ENCODE measurements at regions of chr9 and their contacts with region 1.

Region 1: DNA sequence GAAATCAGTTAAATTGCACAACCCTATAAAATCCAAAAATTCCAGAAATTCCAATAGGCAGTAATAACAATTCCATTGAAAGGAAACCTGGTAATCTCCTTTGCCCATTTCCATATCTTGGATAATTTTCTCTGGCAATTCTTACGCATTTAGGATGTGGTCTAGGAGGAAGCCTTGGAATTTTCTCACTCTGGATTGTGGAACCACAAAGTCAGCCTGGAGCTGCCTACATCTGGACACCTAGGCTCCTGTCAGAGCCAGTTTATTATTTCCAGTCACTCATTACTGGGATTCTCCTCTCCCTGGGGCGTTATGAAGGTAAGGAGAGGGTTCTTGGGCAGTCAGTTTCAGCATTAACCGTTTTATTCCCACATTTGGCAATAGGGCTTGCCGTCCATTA is 40.3 kb upstream of the GNE start:
- DNase-seq: no peak
- ATAC-seq: no peak
- H3K4me3 ChIP-seq: no peak overlapping the region
- H3K4me3 Mint-ChIP-seq: no peak overlapping the region
- H3K27ac ChIP-seq: no peak overlapping the region
- H3K27ac Mint-ChIP-seq: no peak overlapping the region
- H3K4me1 ChIP-seq: no peaks in the 10 kb centered on the region
- H3K4me1 Mint-ChIP-seq: no peaks in the 10 kb centered on the region
- H3K27me3 ChIP-seq: no peaks in the 10 kb centered on the region
- H3K27me3 Mint-ChIP-seq: no peaks in the 10 kb centered on the region
- CTCF ChIP-seq: no peak

Region 2: GRCh38 chr9:36222449-36222848 is 76.1 kb before region 1 on chr9:
- intact Hi-C with region 1: loop called (anchors 2 kb)
- DNase-seq: no peak
- ATAC-seq: no peak
- H3K4me3 ChIP-seq: no peak overlapping the region
- H3K4me3 Mint-ChIP-seq: no peak overlapping the region
- H3K27ac ChIP-seq: no peak overlapping the region
- H3K27ac Mint-ChIP-seq: no peak overlapping the region
- H3K4me1 ChIP-seq: no peaks in the 10 kb centered on the region
- H3K4me1 Mint-ChIP-seq: peaks cover 16 to 20% of the 10 kb centered on the region in 2 donors
- H3K27me3 ChIP-seq: no peaks in the 10 kb centered on the region
- H3K27me3 Mint-ChIP-seq: no peaks in the 10 kb centered on the region
- CTCF ChIP-seq: no peak